Esophagus muscularis mucosa (tissue), 4 donors: ENCODE measurements at regions of chr2 and their contacts with region 1.

Region 1: GRCh38 chr2:239944694-239945551 is 80.2 kb downstream of the NDUFA10 start:
- DNase-seq: no peak
- H3K4me3 ChIP-seq: no peak overlapping the region
- H3K27ac ChIP-seq: no peak overlapping the region
- H3K4me1 ChIP-seq: peaks cover 0 to 27% (median 12%) of the 10 kb centered on the region in 4 donors
- H3K27me3 ChIP-seq: no peaks in the 10 kb centered on the region
- CTCF ChIP-seq: no peak
- EP300 ChIP-seq: no peak
- POLR2A ChIP-seq: no peak

Region 2: DNA sequence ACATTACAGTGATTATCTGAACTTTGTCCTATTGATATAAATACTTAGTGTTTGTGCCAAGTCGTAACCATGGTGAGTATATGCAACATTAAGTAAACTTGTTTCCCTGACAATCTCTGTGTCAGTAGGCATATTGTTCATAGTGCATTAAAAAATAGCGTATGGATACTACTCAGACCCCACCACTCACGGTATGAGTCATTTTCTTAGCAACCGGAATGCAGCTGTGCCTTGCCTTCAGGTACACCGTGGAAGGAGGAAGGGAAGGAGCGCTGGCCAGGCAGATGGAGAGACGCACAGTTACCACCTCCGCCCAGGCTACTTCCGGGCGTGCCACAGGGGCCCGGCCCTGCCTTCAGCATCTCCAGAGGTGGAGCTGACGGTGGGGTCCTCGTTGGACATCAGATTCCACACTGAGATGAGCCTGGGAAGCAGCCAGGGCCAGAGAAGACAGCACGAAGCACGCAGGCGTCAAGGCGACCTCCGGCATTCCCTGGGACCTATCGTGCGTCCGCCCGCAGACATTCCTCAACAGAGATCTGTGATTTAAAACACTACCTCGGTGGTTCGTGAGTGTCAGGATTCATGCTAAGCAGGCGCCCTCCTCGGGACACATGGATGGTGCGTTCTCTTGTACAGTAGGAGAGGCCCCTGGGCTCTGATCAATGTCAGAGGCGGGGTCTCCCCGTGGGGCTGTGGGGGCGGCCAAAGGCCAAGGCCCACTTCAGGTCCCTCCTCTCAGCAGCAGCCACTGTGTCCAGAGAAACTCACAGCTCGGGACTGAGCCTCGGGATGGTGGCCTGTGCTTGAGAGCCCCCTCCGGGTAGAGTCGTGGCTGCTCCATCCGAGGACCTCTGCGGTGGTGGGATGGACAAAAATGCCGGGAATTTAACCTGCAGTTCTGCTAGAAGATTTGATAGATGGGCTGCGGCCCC is 461.9 kb before region 1 on chr2:
- intact Hi-C with region 1: no loop called
- DNase-seq: no peak
- H3K4me3 ChIP-seq: no peak overlapping the region
- H3K27ac ChIP-seq: no peak overlapping the region
- H3K4me1 ChIP-seq: no peaks in the 10 kb centered on the region
- H3K27me3 ChIP-seq: peaks cover 0 to 8% (median 0%) of the 10 kb centered on the region in 4 donors
- CTCF ChIP-seq: no peak
- EP300 ChIP-seq: no peak
- POLR2A ChIP-seq: no peak

Region 3: DNA sequence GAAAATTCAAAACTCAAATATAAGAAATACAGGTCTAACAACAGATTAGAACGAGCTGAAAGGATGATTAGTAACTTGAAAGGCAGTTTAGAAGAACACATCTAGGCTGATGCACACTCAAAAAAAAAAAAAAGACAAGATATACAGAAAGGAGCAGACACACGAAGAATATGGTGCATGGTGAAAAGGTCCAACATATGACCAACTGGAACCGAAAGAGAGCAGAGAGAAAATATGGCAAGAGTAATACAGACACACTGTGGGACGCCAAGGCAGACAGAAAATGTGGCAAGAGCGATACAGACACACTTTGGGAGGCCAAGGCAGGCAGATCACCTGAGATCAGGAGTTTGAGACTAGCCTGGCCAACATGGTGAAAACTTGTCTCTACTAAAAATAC is 40.4 kb after region 1 on chr2:
- intact Hi-C with region 1: loop called (anchors 5 kb)
- DNase-seq: no peak
- H3K4me3 ChIP-seq: no peak overlapping the region
- H3K27ac ChIP-seq: no peak overlapping the region
- H3K4me1 ChIP-seq: peaks cover 0 to 2% (median 1%) of the 10 kb centered on the region in 4 donors
- H3K27me3 ChIP-seq: no peaks in the 10 kb centered on the region
- CTCF ChIP-seq: no peak
- EP300 ChIP-seq: no peak
- POLR2A ChIP-seq: no peak